ENCODE measurements at regions of chr1 and their contacts with region 1.

Region 1: DNA sequence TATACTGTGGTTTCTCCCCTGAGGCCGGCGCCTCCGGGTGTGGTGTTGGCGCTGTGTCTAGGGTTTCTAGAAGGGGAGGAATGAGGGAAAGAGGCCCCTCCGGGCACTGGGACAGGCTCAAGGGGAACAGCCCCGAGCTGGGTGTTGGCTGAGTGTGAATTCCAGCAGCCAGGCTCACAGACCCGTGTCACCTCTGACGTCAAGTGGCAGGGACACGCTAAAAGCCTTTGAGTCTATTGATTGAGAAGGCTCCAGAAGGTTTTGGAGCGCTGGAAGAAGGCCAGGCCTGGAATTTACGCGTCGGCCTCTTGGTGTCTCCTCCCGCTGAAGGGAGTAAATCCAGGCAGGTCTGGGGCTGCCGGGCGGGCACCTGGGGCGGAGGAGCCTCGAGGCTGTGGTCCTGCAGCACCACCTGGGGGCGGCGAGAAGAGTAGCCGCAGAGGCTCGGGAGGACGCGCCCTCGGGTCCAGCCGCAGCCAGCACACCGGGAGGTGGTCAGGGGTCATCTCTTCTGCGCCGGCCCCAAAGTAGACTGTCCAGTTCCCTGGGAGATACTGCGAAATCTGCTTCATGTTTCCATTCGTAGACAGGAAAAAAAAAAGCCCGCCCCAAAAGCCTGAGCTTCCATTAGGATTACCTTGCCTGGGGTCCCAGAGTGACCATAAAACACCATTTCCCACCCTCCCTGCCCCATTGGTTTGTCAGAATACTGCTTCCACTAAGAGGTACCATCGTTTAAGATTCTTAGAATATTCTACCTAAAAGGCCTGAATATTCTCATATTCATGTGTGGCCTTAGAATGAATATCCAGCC is 61.7 kb downstream of the TLR5 start:
- DNase-seq: peak; percentile 93

Region 2: GRCh38 chr1:222792744-222793143 is 288.6 kb before region 1 on chr1:
- in situ Hi-C with region 1: loop called (anchors 25 kb)
- DNase-seq: peak; percentile 48

Region 3: DNA sequence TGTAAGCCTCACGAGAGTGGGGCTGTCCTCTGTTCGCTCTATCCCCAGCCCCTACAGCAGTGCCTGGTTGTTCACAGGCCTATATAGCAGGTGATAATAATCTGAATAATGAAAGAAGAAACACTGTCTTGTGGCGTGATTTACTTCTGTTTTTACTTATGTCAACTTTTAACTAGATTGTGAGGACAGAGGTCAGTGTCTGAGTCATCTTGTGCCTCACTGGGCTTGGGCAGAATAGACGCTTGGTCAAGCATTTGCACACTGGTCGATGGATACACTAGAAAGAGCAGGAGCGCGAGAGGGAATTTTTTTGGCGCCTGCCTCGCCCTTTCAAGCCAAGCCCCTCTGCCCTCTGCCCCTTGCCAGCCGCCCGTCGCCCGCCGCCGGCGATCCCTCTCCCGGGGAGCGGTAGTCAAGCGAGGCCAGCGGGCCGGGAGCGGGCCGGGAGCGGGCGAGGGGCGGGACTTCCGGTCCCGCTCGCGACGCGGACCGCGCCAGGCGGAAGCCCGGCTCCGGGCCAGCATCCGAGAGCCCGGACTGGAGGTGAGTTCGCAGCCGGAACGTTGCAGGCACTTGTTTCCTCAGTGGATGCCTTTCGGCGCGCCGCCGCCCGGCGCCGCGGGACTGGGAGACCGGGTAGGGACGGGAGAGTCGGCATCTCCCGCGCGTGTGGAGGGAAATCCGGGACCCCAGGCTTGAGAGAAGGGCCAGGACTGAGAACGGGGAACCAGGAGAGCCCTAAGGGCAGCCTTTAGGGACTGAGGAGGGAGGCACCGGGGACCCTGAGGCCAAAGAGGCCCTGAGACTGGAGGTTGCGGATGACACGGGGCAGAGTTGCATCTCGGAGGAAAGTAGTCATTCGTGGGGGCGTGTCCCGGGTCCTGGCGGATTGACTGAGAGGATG is 266.6 kb before region 1 on chr1 and contains the start of gene DISP1:
- in situ Hi-C with region 1: no loop called
- DNase-seq: peak; percentile 77

Measured in KBM-7 (cell line).